GM12878 (cell line): ENCODE measurements at regions of chr16 and their contacts with region 1.

Region 1: DNA sequence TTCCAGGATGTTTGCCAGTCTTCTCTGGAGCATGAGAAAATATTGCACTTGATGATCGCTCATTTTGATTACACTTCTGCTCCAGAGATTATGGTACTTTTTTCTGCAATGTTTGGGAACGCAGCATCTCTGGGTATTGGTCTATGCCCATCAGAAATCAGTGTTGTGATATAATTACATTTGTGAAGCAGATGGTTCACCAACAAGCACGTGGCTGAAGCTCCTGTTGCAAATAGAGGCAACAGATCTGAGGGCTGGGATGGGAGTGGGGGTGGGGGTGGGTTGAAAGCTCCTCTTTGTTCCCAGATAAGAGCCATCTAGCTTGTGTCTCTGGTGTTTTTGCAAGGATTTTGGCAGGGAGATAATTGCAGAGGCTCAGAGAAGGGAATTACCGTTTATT is 252.3 kb downstream of the SHISA9 start:
- DNase-seq: no peak
- ATAC-seq: no peak
- H3K4me3 ChIP-seq: no peak overlapping the region
- H3K27ac ChIP-seq: no peak overlapping the region
- H3K4me1 ChIP-seq: no peaks in the 10 kb centered on the region
- H3K27me3 ChIP-seq: no peaks in the 10 kb centered on the region
- CTCF ChIP-seq: no peak
- EP300 ChIP-seq: no peak
- POLR2A ChIP-seq: no peak
- RAD21 ChIP-seq: no peak

Region 2: DNA sequence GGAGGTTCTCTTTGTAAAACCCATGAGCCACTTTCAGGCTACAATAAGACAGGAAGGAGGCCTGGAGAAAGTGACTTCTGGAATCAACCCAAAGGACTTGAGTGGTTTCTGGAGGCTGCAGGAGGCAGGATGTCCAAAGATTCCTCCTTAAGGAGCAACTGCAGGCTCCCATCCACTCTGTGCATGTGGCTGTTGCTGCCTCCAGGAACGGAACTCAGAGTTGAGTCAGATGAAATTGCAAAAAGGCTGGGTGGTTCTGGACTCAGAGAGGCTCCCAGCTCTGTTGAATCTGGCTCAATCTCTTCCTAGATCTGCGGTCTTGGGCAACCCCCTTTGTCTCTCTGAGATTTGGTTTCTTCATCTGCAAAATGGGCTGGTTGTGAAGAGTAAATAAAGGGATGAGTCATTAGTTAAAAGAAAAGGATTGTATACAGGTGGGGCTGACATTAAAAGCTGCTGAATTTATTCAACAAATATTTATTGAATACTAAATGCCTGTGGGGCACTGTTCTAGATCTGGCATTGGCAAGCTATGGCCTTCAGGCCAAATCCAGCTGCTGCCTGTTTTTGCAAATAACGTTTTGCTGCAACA is 55.1 kb before region 1 on chr16:
- CTCF ChIA-PET with region 1: no interaction called
- POLR2A ChIA-PET with region 1: interaction called, 5 read pairs
- RAD21 ChIA-PET with region 1: interaction called, 3 read pairs
- SMC1A ChIA-PET with region 1: interaction called, 21 read pairs
- in situ Hi-C with region 1: no loop called
- intact Hi-C with region 1: no loop called
- DNase-seq: no peak
- ATAC-seq: peak; percentile 54
- H3K4me3 ChIP-seq: no peak overlapping the region
- H3K27ac ChIP-seq: no peak overlapping the region
- H3K4me1 ChIP-seq: no peaks in the 10 kb centered on the region
- H3K27me3 ChIP-seq: no peaks in the 10 kb centered on the region
- CTCF ChIP-seq: no peak
- EP300 ChIP-seq: no peak
- POLR2A ChIP-seq: no peak
- RAD21 ChIP-seq: no peak

Region 3: DNA sequence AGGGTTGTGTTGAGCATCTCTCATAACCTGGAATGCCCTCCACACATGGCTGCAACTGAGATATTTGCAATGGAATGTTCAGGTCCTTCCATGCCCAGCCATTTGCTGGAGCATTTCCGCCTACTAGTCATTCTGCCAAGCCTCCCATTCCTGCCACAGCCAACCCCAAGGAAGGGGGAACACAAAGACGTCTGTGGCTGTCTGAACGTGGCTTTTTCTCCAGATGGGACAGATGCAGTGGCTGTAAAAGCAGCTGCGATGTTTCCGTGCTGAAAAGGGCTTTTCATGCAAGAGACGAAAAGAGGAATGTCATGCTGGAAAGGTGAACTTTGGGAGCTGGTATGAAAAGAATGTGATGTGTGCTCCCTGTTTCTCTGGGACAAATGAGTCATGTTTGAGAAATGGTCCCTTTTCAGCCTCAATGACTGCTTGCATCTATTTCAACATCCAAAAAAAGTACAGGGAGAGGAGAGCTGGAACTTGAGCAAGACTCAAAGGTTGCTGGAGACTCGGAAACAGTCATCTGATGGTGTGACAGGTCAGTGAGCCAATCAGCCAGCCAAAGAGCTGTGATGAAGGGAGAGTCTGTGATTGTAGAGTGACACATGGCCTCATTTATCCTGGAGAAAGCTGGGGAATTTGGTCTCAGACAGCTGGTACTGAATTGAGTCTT is 43.4 kb before region 1 on chr16:
- CTCF ChIA-PET with region 1: no interaction called
- POLR2A ChIA-PET with region 1: no interaction called
- RAD21 ChIA-PET with region 1: interaction called, 4 read pairs
- SMC1A ChIA-PET with region 1: interaction called, 12 read pairs
- in situ Hi-C with region 1: no loop called
- intact Hi-C with region 1: no loop called
- DNase-seq: no peak
- ATAC-seq: no peak
- H3K4me3 ChIP-seq: no peak overlapping the region
- H3K27ac ChIP-seq: no peak overlapping the region
- H3K4me1 ChIP-seq: no peaks in the 10 kb centered on the region
- H3K27me3 ChIP-seq: no peaks in the 10 kb centered on the region
- CTCF ChIP-seq: no peak
- EP300 ChIP-seq: no peak
- POLR2A ChIP-seq: no peak
- RAD21 ChIP-seq: no peak

Region 4: DNA sequence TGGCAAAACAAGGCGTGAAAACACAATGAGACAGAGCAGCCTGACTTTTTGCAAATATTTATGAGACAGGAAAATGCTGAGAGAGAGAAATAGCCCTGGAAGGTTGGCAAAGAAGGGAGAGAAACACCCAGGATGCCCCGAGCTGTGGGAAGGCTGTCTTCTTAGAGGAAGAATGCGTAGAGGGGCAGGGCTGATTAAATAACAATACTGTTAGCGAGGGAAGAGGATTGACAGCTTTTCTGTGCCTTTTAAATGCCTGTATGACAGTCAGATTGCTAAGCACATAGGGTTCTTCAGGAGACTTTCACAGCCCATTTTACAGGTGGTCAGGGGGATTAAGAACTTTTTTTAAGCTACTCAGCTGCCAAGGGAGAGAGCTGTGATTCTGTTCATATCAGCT is 33.1 kb before region 1 on chr16:
- CTCF ChIA-PET with region 1: interaction called, 4 read pairs
- POLR2A ChIA-PET with region 1: interaction called, 3 read pairs
- RAD21 ChIA-PET with region 1: interaction called, 5 read pairs
- SMC1A ChIA-PET with region 1: interaction called, 11 read pairs
- in situ Hi-C with region 1: no loop called
- intact Hi-C with region 1: no loop called
- DNase-seq: no peak
- ATAC-seq: no peak
- H3K4me3 ChIP-seq: no peak overlapping the region
- H3K27ac ChIP-seq: no peak overlapping the region
- H3K4me1 ChIP-seq: no peaks in the 10 kb centered on the region
- H3K27me3 ChIP-seq: no peaks in the 10 kb centered on the region
- CTCF ChIP-seq: no peak
- EP300 ChIP-seq: no peak
- POLR2A ChIP-seq: no peak
- RAD21 ChIP-seq: no peak

Region 5: GRCh38 chr16:13130586-13130985 is 23.1 kb before region 1 on chr16:
- CTCF ChIA-PET with region 1: no interaction called
- POLR2A ChIA-PET with region 1: interaction called, 15 read pairs
- RAD21 ChIA-PET with region 1: interaction called, 3 read pairs
- SMC1A ChIA-PET with region 1: no interaction called
- in situ Hi-C with region 1: no loop called
- intact Hi-C with region 1: no loop called
- DNase-seq: no peak
- ATAC-seq: no peak; the same call in 2 of the 3 replicates
- H3K4me3 ChIP-seq: no peak overlapping the region
- H3K27ac ChIP-seq: no peak overlapping the region
- H3K4me1 ChIP-seq: no peaks in the 10 kb centered on the region
- H3K27me3 ChIP-seq: no peaks in the 10 kb centered on the region
- CTCF ChIP-seq: no peak
- EP300 ChIP-seq: no peak
- POLR2A ChIP-seq: no peak
- RAD21 ChIP-seq: no peak

Region 6: DNA sequence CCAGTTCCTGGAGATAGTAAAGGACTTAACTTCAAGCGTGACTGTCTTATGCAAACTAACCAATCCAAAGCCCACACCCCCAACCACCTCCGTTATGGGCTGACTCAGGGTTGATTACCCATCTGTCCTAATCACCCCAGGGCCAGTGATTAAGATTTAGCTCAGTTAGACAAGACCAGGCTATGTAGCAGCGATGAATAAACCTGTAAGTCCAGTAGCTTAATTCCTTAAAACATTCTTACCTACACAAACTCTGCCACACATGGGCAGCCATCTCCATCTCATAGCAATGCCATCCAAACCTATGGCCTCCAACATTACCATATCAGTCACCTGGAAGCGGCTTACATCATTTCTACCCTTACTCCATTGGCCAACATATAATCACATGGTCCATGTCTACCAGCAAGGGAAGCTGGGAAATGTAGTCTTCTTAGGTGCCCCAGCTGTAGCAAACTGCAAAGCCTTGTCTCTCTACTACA is 14.4 kb after region 1 on chr16:
- CTCF ChIA-PET with region 1: interaction called, 3 read pairs
- POLR2A ChIA-PET with region 1: no interaction called
- RAD21 ChIA-PET with region 1: interaction called, 5 read pairs
- SMC1A ChIA-PET with region 1: interaction called, 11 read pairs
- in situ Hi-C with region 1: no loop called
- intact Hi-C with region 1: no loop called
- DNase-seq: no peak
- ATAC-seq: peak; percentile 59; the same call in 2 of the 3 replicates
- H3K4me3 ChIP-seq: no peak overlapping the region
- H3K27ac ChIP-seq: no peak overlapping the region
- H3K4me1 ChIP-seq: no peaks in the 10 kb centered on the region
- H3K27me3 ChIP-seq: no peaks in the 10 kb centered on the region
- CTCF ChIP-seq: no peak
- EP300 ChIP-seq: no peak
- POLR2A ChIP-seq: no peak
- RAD21 ChIP-seq: no peak

Region 7: GRCh38 chr16:13203725-13204124 is 50.0 kb after region 1 on chr16:
- CTCF ChIA-PET with region 1: no interaction called
- POLR2A ChIA-PET with region 1: no interaction called
- RAD21 ChIA-PET with region 1: no interaction called
- SMC1A ChIA-PET with region 1: no interaction called
- in situ Hi-C with region 1: no loop called
- intact Hi-C with region 1: no loop called
- DNase-seq: no peak
- ATAC-seq: no peak
- H3K4me3 ChIP-seq: no peak overlapping the region
- H3K27ac ChIP-seq: no peak overlapping the region
- H3K4me1 ChIP-seq: no peaks in the 10 kb centered on the region
- H3K27me3 ChIP-seq: no peaks in the 10 kb centered on the region
- CTCF ChIP-seq: no peak
- EP300 ChIP-seq: no peak
- POLR2A ChIP-seq: no peak
- RAD21 ChIP-seq: no peak